Psoas muscle (tissue), 8 donors: ENCODE measurements at regions of chr1 and their contacts with region 1.

Region 1: DNA sequence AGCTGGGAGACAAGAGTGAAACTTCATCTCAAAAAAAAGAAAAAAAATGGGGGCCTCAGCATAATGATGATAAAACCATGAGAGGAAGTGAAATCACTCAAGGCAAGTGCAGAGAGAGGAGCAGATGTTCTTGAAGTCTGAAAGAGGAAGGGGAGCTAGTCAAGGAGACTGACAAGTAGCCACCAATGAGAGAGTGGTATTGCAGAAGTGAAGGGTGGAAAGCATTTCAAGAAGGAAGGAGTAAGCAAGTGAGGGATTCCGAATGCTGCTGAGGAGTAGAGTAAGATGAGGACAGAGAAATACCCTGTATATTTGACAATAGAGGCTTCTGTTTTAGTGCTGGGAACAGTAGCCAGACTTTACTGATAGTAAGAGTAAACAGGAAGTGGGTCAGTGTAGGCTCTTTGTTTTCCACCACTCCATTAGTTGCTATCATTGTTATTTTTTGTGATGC is 2.9 kb downstream of the TATDN3 start:
- DNase-seq: no peak
- ATAC-seq: no peak
- H3K4me3 ChIP-seq: no peak overlapping the region
- H3K27ac ChIP-seq: no peak overlapping the region
- H3K4me1 ChIP-seq: peaks cover 6% of the 10 kb centered on the region
- H3K27me3 ChIP-seq: no peaks in the 10 kb centered on the region
- CTCF ChIP-seq: no peak

Region 2: GRCh38 chr1:212838145-212838544 is 43.6 kb after region 1 on chr1:
- intact Hi-C with region 1: loop called in 1 of 2 experiments (anchors 2 kb)
- DNase-seq: no peak
- ATAC-seq: no peak
- H3K4me3 ChIP-seq: no peak overlapping the region
- H3K27ac ChIP-seq: no peak overlapping the region
- H3K4me1 ChIP-seq: no peaks in the 10 kb centered on the region
- H3K27me3 ChIP-seq: no peaks in the 10 kb centered on the region
- CTCF ChIP-seq: no peak

Region 3: DNA sequence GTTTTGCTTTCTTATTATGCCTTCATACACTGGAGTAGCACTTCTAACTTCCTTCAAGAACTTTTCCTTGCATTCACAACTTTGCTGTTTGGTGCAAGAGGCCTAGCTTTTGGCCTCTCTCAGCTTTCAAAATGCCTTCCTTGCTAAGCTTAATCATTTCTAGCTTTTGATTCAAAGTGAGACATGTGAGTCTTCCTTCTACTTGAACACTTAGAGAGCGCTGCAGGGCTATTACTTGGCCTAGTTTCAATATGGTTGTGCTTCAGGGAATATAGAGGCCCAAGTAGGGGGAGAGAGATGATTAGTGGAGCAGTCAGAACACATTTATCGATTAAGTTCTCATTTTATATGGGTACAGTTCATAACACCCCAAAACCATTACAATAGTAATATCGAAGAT is 208.7 kb after region 1 on chr1:
- intact Hi-C with region 1: loop called in 1 of 2 experiments (anchors 5 kb)
- DNase-seq: no peak
- ATAC-seq: no peak
- H3K4me3 ChIP-seq: no peak overlapping the region
- H3K27ac ChIP-seq: no peak overlapping the region
- H3K4me1 ChIP-seq: no peaks in the 10 kb centered on the region
- H3K27me3 ChIP-seq: no peaks in the 10 kb centered on the region
- CTCF ChIP-seq: no peak